ENCODE measurements at regions of chr11 and their contacts with region 1.

Region 1: GRCh38 chr11:43852057-43852636 is 28.5 kb upstream of the ALKBH3 start:
- DNase-seq: peak; percentile 79
- H3K4me3 ChIP-seq: no peak overlapping the region
- H3K27ac ChIP-seq: no peak overlapping the region
- H3K27me3 ChIP-seq: no peaks in the 10 kb centered on the region
- CTCF ChIP-seq: peak; percentile 94

Region 2: GRCh38 chr11:43504316-43504950 is 347.7 kb before region 1 on chr11:
- CTCF ChIA-PET with region 1: interaction called, 16 read pairs
- POLR2A ChIA-PET with region 1: no interaction called
- DNase-seq: no peak
- H3K4me3 ChIP-seq: no peak overlapping the region
- H3K27ac ChIP-seq: no peak overlapping the region
- H3K27me3 ChIP-seq: no peaks in the 10 kb centered on the region
- CTCF ChIP-seq: peak; percentile 37

Region 3: DNA sequence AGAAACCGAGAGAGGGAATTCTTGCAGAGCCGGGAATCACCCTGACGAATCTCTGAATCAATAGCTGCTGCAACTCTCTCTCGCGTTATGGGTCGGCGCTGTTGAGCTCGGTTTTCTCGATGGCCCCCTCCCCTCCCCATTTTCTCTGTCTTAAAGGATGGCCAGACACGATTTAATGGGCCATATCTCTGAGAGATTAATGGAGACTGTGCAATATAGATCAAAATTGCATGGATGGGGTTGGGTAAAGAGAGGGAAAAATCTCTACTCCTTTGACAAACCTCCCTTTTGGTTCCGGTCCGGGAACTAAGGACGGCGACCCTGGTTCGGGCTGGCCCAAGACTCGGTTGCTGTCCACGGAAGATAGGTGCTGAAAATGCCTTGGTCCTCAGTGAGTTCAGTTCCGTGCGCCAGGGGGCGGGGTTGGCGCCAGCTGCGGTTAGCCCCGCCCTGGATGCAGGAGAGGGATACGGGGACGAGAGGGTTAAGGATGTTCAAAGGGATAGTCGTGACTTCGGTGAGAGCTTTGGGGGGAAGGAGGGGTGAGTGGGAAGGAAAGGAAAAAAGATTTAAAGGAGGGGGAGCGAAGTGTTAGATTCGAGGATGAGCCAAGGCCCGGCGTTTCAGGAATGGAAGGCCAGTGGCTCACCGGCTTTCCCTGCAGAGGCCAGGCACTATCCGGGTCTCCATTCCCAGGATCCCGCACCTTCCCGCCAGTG is 275.2 kb before region 1 on chr11:
- CTCF ChIA-PET with region 1: interaction called, 10 read pairs
- POLR2A ChIA-PET with region 1: no interaction called
- DNase-seq: no peak
- H3K4me3 ChIP-seq: no peak overlapping the region; the same call in 1 of the 2 replicates
- H3K27ac ChIP-seq: no peak overlapping the region
- H3K27me3 ChIP-seq: peaks cover 85% of the 10 kb centered on the region
- CTCF ChIP-seq: peak; percentile 43

Region 4: DNA sequence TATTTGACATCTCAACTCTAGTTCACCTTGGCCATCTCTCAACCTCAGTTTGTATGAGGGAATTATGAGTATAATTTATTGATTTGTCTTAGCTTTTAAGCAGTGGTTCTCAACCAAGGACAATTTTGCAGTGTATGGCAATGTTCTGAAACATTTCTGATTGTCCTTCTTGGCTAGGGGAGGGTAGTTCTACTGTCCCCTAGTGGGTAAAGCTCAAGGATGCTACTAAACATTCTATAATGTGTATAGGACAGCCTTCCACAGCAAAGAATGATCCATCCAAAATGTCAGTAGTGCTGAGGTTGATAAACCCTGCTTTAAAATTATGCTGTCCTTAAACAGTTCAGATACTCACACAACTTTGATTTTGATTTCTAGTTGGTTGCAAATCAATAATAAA is 49.6 kb before region 1 on chr11:
- CTCF ChIA-PET with region 1: interaction called, 14 read pairs
- POLR2A ChIA-PET with region 1: no interaction called
- DNase-seq: no peak
- H3K4me3 ChIP-seq: no peak overlapping the region
- H3K27ac ChIP-seq: no peak overlapping the region
- H3K27me3 ChIP-seq: no peaks in the 10 kb centered on the region
- CTCF ChIP-seq: peak; percentile 50

Region 5: GRCh38 chr11:43835104-43835503 is 17.0 kb before region 1 on chr11:
- CTCF ChIA-PET with region 1: interaction called, 249 read pairs
- POLR2A ChIA-PET with region 1: no interaction called
- DNase-seq: no peak
- H3K4me3 ChIP-seq: no peak overlapping the region
- H3K27ac ChIP-seq: no peak overlapping the region
- H3K27me3 ChIP-seq: no peaks in the 10 kb centered on the region
- CTCF ChIP-seq: no peak

Region 6: GRCh38 chr11:43868852-43869567 is 16.9 kb after region 1 on chr11:
- CTCF ChIA-PET with region 1: interaction called, 28 read pairs
- POLR2A ChIA-PET with region 1: no interaction called
- DNase-seq: no peak
- H3K4me3 ChIP-seq: no peak overlapping the region
- H3K27ac ChIP-seq: no peak overlapping the region
- H3K27me3 ChIP-seq: peaks cover 20% of the 10 kb centered on the region
- CTCF ChIP-seq: no peak

Measured in AG04450 (cell line).